SK-N-SH (cell line): ENCODE measurements at regions of chr2 and their contacts with region 1.

Region 1: DNA sequence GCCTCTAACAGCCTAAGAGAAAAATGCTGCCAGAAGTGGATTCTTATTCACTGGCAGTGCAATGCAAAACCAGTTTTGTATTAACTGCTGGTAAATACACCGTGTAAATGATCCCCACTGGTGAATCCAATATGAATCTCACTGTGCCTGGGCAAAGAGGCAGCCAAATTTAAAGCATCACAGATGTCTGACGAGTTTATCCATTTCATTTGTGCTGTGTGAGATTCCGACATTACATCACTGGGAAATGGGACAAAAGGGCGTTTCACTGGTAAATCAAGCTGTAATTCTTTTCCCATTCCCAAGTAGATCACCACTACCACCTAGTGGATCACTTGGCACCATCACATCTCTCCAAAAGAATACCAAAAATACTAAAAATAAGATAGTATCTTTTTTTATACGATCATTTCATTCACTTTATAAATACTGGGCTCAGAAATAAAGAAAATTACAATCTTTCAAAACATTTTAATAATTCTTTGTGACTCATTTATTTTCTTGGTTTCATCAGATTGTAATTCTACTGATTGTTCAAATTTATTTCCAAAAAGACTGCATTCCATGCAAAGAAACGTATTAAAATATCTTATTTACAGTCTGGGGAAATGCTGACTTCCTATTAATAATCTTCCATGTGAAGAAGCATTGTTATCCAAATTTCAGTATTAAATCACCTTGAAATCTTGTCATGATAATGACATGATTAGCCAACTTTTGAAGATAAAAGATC is 125.6 kb downstream of the GRB14 start:
- DNase-seq: peak; percentile 28
- H3K4me3 ChIP-seq: no peak overlapping the region; a peak in 1 of 4 replicates
- H3K27ac ChIP-seq: no peak overlapping the region
- H3K4me1 ChIP-seq: no peaks in the 10 kb centered on the region
- H3K27me3 ChIP-seq: no peaks in the 10 kb centered on the region
- CTCF ChIP-seq: peak; percentile 67
- EP300 ChIP-seq: no peak
- RAD21 ChIP-seq: peak; percentile 81

Region 2: DNA sequence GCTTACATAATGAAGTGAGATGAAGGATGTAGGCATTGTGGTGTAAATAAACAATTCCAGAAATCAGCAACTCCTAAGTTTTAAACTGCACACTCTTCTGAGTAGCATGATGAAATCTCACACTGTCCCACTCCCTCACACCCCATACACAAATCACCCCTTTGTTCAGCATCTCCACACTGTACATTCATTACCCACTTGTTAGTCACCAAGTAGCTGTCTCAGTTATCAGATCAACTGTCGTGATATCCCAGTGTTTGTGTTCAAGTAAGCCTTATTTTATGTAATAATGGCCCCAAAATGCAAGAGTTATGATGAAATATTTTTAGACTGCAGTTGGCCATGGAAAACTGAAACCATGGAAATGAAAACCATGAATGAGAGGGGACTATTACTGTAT is 10.1 kb before region 1 on chr2:
- CTCF ChIA-PET with region 1: interaction called, 11 read pairs
- POLR2A ChIA-PET with region 1: no interaction called
- DNase-seq: no peak
- H3K4me3 ChIP-seq: no peak overlapping the region
- H3K27ac ChIP-seq: no peak overlapping the region
- H3K4me1 ChIP-seq: no peaks in the 10 kb centered on the region
- H3K27me3 ChIP-seq: no peaks in the 10 kb centered on the region
- CTCF ChIP-seq: no peak
- EP300 ChIP-seq: no peak
- RAD21 ChIP-seq: no peak

Region 3: GRCh38 chr2:164538240-164538866 is 42.7 kb after region 1 on chr2:
- CTCF ChIA-PET with region 1: interaction called, 10 read pairs
- POLR2A ChIA-PET with region 1: no interaction called
- DNase-seq: peak; percentile 55
- H3K4me3 ChIP-seq: no peak overlapping the region; a peak in 1 of 4 replicates
- H3K27ac ChIP-seq: no peak overlapping the region
- H3K4me1 ChIP-seq: peaks cover 3 to 7% of the 10 kb centered on the region in 2 experiments; a peak in 3 of 4 replicates
- H3K27me3 ChIP-seq: no peaks in the 10 kb centered on the region
- CTCF ChIP-seq: peak; percentile 77
- EP300 ChIP-seq: no peak
- RAD21 ChIP-seq: peak; percentile 81